Mammary epithelial cell (primary cell): ENCODE measurements at regions of chr15 and their contacts with region 1.

Region 1: DNA sequence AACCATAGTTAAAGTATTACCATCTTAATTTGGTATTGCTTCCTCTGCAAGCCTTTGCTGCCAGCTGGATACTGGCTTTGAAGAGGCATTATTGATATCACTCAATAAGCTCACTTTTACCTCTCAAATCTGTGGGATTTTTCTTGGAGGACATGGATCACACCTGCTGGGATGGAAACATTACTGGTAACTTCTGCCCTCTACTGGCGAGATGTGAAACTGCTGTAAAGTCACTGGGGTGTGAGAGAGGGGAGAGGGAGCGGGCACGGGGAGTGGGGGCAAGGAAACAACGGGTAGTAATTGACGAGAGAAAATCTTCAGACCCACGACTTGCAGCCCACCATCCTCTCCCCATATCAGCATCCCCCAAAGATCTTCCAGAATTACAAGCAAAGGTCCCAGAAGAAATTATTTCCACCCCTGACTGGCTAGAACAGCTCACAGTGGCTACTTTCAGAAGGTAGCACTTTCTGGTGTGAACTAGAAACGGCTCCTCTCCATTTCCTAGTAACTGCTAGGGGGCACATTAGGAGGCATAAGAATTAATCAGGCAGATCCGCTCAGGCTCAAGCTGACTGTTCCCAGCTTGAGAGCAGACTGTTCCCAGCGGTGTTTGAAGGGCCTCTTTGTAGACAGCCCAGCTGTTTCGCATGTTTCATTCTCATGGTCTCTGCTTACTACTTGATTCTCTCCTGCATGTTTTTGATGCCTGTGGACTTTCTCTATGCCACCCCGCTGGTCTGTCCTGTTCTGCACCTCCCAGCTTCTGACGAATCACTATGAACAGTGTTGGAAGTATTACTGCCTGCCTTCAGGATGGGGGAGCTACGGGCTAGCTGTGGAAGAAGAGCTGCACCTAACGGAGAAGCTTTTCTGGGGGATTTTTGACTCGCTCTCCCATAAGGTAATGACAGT is 230.4 kb upstream of the CHRM5 start:
- DNase-seq: peak; percentile 13
- H3K4me3 ChIP-seq: no peak overlapping the region
- H3K27ac ChIP-seq: no peak overlapping the region
- H3K4me1 ChIP-seq: no peaks in the 10 kb centered on the region
- H3K27me3 ChIP-seq: no peaks in the 10 kb centered on the region
- CTCF ChIP-seq: peak; percentile 73 to 85

Region 2: DNA sequence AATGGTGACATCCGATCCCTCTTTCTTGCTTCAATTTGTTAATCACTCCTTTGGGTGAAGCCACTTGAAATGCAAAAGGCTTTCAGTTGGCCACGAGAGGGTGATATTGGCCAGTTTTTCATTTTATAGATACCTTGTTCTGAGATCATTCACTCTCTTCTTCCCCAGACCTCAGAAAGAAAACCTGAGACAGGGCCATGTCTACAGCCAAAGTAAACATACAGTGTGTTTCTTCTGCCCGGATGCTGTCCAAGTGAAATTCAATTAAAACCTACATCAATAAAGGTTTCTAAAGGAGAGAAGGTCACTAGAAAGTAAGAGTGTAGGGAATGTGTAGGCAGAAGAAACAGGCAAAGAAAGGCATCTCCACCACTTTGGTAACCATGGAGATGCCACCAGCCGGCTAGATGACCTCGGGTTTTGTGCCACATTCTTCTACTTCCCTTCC is 503.9 kb before region 1 on chr15:
- CTCF ChIA-PET with region 1: no interaction called
- dilution Hi-C with region 1: no loop called
- in situ Hi-C with region 1: loop called in 1 of 2 experiments (anchors 10 kb)
- intact Hi-C with region 1: no loop called
- DNase-seq: peak; percentile 67
- H3K4me3 ChIP-seq: no peak overlapping the region
- H3K27ac ChIP-seq: no peak overlapping the region
- H3K4me1 ChIP-seq: peaks cover 6% of the 10 kb centered on the region
- H3K27me3 ChIP-seq: no peaks in the 10 kb centered on the region
- CTCF ChIP-seq: peak; percentile 68 to 77

Region 3: GRCh38 chr15:33778852-33779251 is 40.9 kb after region 1 on chr15:
- CTCF ChIA-PET with region 1: interaction called, 10 read pairs
- dilution Hi-C with region 1: no loop called
- in situ Hi-C with region 1: no loop called
- intact Hi-C with region 1: no loop called
- DNase-seq: no peak
- H3K4me3 ChIP-seq: no peak overlapping the region
- H3K27ac ChIP-seq: no peak overlapping the region
- H3K4me1 ChIP-seq: no peaks in the 10 kb centered on the region
- H3K27me3 ChIP-seq: no peaks in the 10 kb centered on the region
- CTCF ChIP-seq: no peak

Region 4: DNA sequence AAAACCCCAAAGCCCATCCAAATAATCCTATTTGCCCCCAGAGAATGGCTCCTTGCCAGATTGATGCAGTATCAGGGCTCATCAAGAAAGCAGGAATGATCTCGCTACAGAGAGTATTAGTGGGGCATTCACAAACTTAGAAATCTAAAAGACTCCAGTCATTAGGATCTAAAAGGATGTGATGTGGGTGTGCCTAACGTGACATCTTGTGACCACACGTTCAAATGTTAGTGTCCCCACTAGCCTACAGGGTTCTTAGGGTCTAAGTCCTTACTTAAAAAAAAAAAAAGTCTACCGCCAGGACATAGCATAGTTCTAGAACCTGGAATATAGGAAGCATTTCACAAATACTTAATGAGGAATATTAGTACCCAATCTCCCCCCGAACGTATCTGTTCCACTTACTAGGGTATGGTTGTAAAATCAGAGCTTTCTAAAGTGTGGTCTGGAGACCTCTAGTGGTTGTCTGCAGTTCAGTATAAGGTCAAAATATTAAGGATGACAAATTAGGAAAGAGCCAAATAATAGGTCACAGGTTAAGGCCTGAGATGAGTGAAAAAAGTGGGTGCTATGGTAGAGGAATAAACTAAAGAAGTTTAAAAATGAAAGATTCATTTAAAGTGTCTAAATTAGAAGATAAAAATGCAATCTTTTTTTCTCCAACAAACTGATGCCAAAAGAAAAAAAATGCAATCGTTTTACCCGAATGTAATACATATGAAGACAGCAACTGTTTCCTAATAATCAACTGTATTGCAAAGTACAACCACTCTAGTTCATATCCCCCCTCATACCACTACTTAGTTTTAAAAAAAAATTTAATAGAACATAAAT is 226.1 kb after region 1 on chr15:
- CTCF ChIA-PET with region 1: no interaction called
- dilution Hi-C with region 1: no loop called
- in situ Hi-C with region 1: loop called (anchors 25 kb)
- intact Hi-C with region 1: loop called (anchors 1 kb)
- DNase-seq: peak; percentile 14
- H3K4me3 ChIP-seq: no peak overlapping the region
- H3K27ac ChIP-seq: no peak overlapping the region
- H3K4me1 ChIP-seq: no peaks in the 10 kb centered on the region
- H3K27me3 ChIP-seq: no peaks in the 10 kb centered on the region
- CTCF ChIP-seq: peak; percentile 60 to 73

Region 5: GRCh38 chr15:34038023-34038870 is 300.3 kb after region 1 on chr15:
- CTCF ChIA-PET with region 1: no interaction called
- dilution Hi-C with region 1: no loop called
- in situ Hi-C with region 1: no loop called
- intact Hi-C with region 1: loop called (anchors 1 kb)
- DNase-seq: peak; percentile 63
- H3K4me3 ChIP-seq: peak overlapping the region; percentile 63 to 98 (median 97)
- H3K27ac ChIP-seq: peak overlapping the region; percentile 62
- H3K4me1 ChIP-seq: peaks cover 6% of the 10 kb centered on the region
- H3K27me3 ChIP-seq: no peaks in the 10 kb centered on the region
- CTCF ChIP-seq: no peak